HepG2 (cell line): ENCODE measurements at regions of chr11 and their contacts with region 1.

Region 1: DNA sequence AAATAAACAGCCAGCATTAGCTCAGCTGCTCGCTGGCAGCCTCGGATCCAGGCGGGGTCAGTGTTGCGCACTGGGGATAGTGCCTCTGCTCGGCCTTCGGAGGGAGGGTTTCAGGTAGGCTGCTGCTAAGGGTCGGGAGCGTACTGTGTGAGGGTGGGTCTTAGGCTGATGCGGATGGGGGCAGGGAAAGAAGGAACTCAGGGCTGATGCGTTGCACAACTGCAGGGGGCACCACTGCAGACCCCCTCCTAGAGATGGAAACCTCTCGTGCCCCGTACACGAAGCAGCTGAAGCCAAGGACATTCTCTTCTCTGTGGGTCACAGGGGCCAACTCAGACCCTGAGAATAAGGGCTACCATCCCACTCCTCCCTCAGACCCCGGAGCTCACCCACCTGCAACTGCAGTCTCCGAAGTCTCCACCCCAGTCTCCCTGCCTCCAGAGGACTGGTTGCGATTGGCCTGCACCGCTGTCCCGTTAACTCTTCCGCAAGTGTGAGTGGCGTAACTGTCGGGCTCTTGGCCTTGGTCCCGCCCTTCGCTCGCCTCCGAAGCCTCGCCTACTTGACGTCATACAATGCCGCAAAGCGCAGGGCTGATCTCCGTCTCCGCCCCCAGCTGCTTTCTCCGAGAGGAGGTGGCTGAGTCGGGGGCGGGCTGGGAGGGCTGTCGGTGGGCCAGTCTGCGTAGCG is at the start of gene KBTBD3:
- DNase-seq: peak; percentile 98
- ATAC-seq: peak; percentile 96
- H3K4me3 ChIP-seq: peak within 1 kb of the TSS; percentile 88 to 93 (median 90)
- H3K27ac ChIP-seq: peak within 1 kb of the TSS; percentile 97
- H3K4me1 ChIP-seq: peaks cover 41% of the 10 kb centered on the region
- H3K27me3 ChIP-seq: no peaks in the 10 kb centered on the region; a peak in 1 of 5 replicates
- CTCF ChIP-seq: peak; percentile 75
- EP300 ChIP-seq: no peak
- POLR2A ChIP-seq: peak; percentile 66 to 84; a peak in 3 of 4 replicates
- RAD21 ChIP-seq: peak; percentile 27; the same call in 1 of the 2 replicates
- total RNA-seq, gene KBTBD3: 1.7 and 1.8 TPM in 2 replicates

Region 2: DNA sequence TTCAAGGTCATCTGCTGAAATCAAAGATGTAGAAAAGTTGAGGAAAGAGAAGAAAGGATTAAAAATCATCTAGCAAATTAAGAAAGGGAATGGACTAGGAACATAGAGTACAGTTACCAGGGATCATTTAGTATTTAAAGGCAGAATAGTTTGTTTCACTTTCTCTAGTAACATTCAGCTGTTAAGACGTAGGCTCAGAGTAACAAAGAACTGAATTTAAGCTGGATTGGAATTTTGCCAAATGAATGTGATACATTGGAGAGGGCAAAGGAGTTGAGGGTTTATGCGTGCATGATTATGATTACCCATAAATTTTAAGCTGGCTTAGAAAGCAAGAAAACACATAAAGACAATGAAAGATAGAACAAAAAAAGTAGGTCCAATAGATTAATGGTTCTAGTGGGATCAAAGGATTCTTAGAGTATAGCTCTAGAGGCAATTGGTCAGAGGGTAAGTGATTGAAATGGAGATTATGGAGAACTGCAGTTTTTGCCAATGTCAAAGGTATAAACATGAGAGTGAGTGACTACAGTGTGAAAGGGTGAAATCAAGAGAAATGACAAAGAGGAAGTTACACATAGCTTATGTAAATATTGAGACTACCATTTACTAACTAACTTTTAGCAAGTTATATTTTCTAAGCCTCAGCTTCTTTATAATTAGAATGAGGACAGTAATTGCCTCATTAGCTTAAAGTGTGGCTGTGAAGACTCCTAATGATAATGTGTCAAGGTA is 277.2 kb before region 1 on chr11:
- CTCF ChIA-PET with region 1: no interaction called
- POLR2A ChIA-PET with region 1: no interaction called
- in situ Hi-C with region 1: no loop called
- intact Hi-C with region 1: no loop called
- DNase-seq: no peak
- ATAC-seq: no peak
- H3K4me3 ChIP-seq: no peak overlapping the region
- H3K27ac ChIP-seq: no peak overlapping the region
- H3K4me1 ChIP-seq: no peaks in the 10 kb centered on the region
- H3K27me3 ChIP-seq: no peaks in the 10 kb centered on the region
- CTCF ChIP-seq: no peak
- EP300 ChIP-seq: no peak
- POLR2A ChIP-seq: no peak
- RAD21 ChIP-seq: no peak

Region 3: DNA sequence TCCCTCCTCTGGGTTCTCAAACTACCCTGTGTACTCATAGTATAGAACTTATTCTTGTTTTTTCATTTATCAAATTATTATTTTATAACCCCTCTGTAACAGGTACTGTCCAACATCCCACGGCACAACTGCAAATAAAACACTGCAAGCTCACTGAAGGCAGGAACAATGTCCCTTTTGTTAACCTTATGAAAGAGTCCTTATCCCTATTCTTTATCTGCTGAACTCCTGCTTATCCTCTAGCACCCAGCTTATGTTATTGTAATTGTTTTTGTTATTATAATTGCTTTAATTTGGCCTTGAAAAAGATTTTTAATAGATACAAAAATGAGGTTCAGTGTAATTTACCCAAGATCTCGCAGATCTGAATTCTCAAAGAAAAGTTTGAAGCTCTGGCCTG is 185.4 kb before region 1 on chr11:
- CTCF ChIA-PET with region 1: no interaction called
- POLR2A ChIA-PET with region 1: no interaction called
- in situ Hi-C with region 1: no loop called
- intact Hi-C with region 1: no loop called
- DNase-seq: no peak
- ATAC-seq: no peak
- H3K4me3 ChIP-seq: no peak overlapping the region
- H3K27ac ChIP-seq: no peak overlapping the region
- H3K4me1 ChIP-seq: no peaks in the 10 kb centered on the region
- H3K27me3 ChIP-seq: no peaks in the 10 kb centered on the region
- CTCF ChIP-seq: no peak
- EP300 ChIP-seq: no peak
- POLR2A ChIP-seq: no peak
- RAD21 ChIP-seq: no peak

Region 4: GRCh38 chr11:105937331-105937730 is 139.7 kb before region 1 on chr11:
- CTCF ChIA-PET with region 1: no interaction called
- POLR2A ChIA-PET with region 1: no interaction called
- in situ Hi-C with region 1: no loop called
- intact Hi-C with region 1: no loop called
- DNase-seq: no peak
- ATAC-seq: no peak
- H3K4me3 ChIP-seq: no peak overlapping the region
- H3K27ac ChIP-seq: no peak overlapping the region
- H3K4me1 ChIP-seq: no peaks in the 10 kb centered on the region
- H3K27me3 ChIP-seq: no peaks in the 10 kb centered on the region
- CTCF ChIP-seq: no peak
- EP300 ChIP-seq: no peak
- POLR2A ChIP-seq: no peak
- RAD21 ChIP-seq: no peak

Region 5: GRCh38 chr11:106021967-106022794 is 54.9 kb before region 1 on chr11 and contains the start of gene MSANTD4:
- CTCF ChIA-PET with region 1: no interaction called
- POLR2A ChIA-PET with region 1: interaction called, 9 read pairs
- in situ Hi-C with region 1: loop called (anchors 5 kb)
- intact Hi-C with region 1: loop called (anchors 1 kb)
- DNase-seq: peak; percentile 97
- ATAC-seq: peak; percentile 99
- H3K4me3 ChIP-seq: peak within 1 kb of the TSS; percentile 74 to 96 (median 88)
- H3K27ac ChIP-seq: peak within 1 kb of the TSS; percentile 37
- H3K4me1 ChIP-seq: peaks cover 28% of the 10 kb centered on the region
- H3K27me3 ChIP-seq: no peaks in the 10 kb centered on the region
- CTCF ChIP-seq: 0 out of 2 replicates have a peak, but pooled peaks have one; percentile 7
- EP300 ChIP-seq: no peak
- POLR2A ChIP-seq: peak; percentile 46 to 69
- RAD21 ChIP-seq: no peak
- total RNA-seq, gene MSANTD4: 15.7 and 25.1 TPM in 2 replicates

Region 6: DNA sequence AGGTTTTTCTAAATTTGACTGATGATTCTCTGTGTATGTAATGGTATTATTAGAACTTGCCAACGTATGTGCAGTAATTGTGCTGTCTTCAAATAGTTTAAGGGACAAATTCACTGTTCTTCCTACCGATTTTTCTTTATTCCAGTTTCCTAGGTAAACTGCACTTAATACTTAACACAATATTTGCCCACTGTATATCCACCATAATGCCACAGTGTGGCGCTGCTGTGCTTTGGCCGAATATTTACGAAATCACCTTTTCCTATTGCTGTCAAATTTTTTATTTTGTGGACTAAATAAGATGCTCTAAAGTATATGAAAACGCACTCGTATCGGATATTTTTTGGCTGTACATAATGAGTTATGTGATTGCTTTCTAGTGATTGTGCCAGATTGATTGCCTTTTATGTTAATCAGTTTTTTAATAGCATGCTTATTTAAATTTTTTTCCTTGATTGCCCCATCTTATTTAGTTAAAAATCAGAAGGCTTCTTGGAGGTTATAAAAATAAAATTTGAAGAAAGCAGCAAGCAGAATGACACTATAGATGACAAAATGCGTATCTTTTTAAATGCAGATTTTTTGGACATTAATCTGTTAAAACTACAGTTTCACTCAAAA is 10.9 kb after region 1 on chr11:
- CTCF ChIA-PET with region 1: no interaction called
- POLR2A ChIA-PET with region 1: interaction called, 13 read pairs
- in situ Hi-C with region 1: no loop called
- intact Hi-C with region 1: no loop called
- DNase-seq: peak; percentile 62
- ATAC-seq: peak; percentile 75
- H3K4me3 ChIP-seq: no peak overlapping the region
- H3K27ac ChIP-seq: no peak overlapping the region
- H3K4me1 ChIP-seq: peaks cover 19% of the 10 kb centered on the region
- H3K27me3 ChIP-seq: no peaks in the 10 kb centered on the region
- CTCF ChIP-seq: peak; percentile 81
- EP300 ChIP-seq: no peak
- POLR2A ChIP-seq: no peak
- RAD21 ChIP-seq: 0 out of 2 replicates have a peak, but pooled peaks have one; percentile 36

Region 7: GRCh38 chr11:106216281-106216680 is 139.2 kb after region 1 on chr11:
- CTCF ChIA-PET with region 1: no interaction called
- POLR2A ChIA-PET with region 1: no interaction called
- in situ Hi-C with region 1: no loop called
- intact Hi-C with region 1: no loop called
- DNase-seq: no peak
- ATAC-seq: no peak
- H3K4me3 ChIP-seq: no peak overlapping the region
- H3K27ac ChIP-seq: no peak overlapping the region
- H3K4me1 ChIP-seq: no peaks in the 10 kb centered on the region
- H3K27me3 ChIP-seq: no peaks in the 10 kb centered on the region
- CTCF ChIP-seq: no peak
- EP300 ChIP-seq: no peak
- POLR2A ChIP-seq: no peak
- RAD21 ChIP-seq: no peak

Region 8: DNA sequence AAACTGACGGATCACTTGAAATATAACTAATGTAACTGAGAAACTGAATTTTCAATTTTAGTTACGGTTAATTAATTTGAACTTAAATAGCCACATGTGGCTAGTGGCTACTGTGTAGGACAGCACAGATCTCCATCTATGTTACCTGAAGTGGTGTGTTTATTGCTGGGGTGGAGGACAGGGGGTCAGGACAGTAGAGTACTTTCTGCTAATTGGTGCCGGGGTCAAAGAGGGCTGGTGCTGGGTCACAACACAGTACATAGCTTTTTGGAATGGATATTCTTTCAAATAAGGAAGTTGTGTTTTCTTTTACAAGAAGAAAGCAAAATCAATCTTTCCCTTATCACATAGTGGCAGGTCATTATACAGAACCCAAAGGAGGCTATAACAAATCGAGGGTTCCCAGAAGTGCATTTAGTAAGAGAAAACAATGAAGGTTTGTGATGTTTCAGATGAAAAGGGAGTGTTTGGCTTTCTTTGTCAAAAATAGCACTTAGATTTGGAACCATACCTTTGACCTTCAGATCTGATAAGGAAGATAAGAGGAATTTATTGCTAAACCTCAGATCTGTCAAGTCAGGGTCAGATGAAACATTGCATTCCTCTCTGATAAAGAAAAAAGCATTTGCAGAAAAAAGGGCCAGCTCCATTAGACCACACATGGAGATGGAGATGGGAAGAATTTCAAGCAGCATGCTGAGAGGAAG is 384.9 kb after region 1 on chr11:
- CTCF ChIA-PET with region 1: no interaction called
- POLR2A ChIA-PET with region 1: no interaction called
- in situ Hi-C with region 1: no loop called
- intact Hi-C with region 1: loop called (anchors 5 kb)
- DNase-seq: peak; percentile 89
- ATAC-seq: peak; percentile 76
- H3K4me3 ChIP-seq: no peak overlapping the region
- H3K27ac ChIP-seq: peak overlapping the region; percentile 19
- H3K4me1 ChIP-seq: peaks cover 60% of the 10 kb centered on the region
- H3K27me3 ChIP-seq: no peaks in the 10 kb centered on the region
- CTCF ChIP-seq: no peak
- EP300 ChIP-seq: peak in 1 of 2 experiments; percentile 62; a peak in 1 of 4 replicates
- POLR2A ChIP-seq: no peak
- RAD21 ChIP-seq: no peak

Region 9: DNA sequence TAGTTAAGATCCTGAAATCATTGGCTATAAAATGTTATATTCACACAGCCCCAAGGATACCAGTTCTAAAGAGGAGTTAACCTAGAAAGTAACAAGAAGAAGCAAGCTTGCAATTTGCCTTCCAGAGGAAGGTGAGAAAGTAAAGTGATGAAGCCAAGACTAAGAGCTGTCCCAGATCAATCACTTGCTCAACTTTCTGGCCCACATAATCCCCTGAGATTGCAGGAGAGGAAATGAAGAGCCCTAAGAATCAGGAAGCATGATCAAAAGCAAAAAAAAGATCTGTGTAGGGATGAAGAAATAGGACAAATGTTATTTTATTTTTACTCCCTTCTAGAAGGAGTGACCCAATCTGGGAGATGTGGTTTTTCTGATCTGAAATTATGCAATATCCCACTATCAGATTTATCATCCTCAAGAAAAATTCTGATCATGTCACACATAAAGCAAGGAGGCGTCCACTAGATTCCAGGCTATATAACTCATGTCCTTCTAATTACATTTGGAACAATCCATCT is 1121.5 kb after region 1 on chr11:
- CTCF ChIA-PET with region 1: no interaction called
- POLR2A ChIA-PET with region 1: no interaction called
- in situ Hi-C with region 1: no loop called
- intact Hi-C with region 1: loop called (anchors 10 kb)
- DNase-seq: no peak
- ATAC-seq: no peak
- H3K4me3 ChIP-seq: no peak overlapping the region
- H3K27ac ChIP-seq: no peak overlapping the region
- H3K4me1 ChIP-seq: peaks cover 49% of the 10 kb centered on the region
- H3K27me3 ChIP-seq: no peaks in the 10 kb centered on the region
- CTCF ChIP-seq: no peak
- EP300 ChIP-seq: no peak
- POLR2A ChIP-seq: no peak
- RAD21 ChIP-seq: no peak